GM13976 (cell line): ENCODE measurements at regions of chr17 and their contacts with region 1.

Region 1: GRCh38 chr17:45277216-45277849 is 15.4 kb upstream of the SPATA32 start:
- DNase-seq: peak; percentile 86
- CTCF ChIP-seq: peak; percentile 85

Region 2: GRCh38 chr17:44887971-44888954 is 389.1 kb before region 1 on chr17:
- in situ Hi-C with region 1: no loop called
- DNase-seq: no peak
- CTCF ChIP-seq: no peak

Region 3: GRCh38 chr17:45385331-45385997 is 108.1 kb after region 1 on chr17:
- in situ Hi-C with region 1: loop called (anchors 10 kb)
- DNase-seq: peak; percentile 91
- CTCF ChIP-seq: peak; percentile 97